PC-9 (cell line): ENCODE measurements at regions of chr20 and their contacts with region 1.

Region 1: DNA sequence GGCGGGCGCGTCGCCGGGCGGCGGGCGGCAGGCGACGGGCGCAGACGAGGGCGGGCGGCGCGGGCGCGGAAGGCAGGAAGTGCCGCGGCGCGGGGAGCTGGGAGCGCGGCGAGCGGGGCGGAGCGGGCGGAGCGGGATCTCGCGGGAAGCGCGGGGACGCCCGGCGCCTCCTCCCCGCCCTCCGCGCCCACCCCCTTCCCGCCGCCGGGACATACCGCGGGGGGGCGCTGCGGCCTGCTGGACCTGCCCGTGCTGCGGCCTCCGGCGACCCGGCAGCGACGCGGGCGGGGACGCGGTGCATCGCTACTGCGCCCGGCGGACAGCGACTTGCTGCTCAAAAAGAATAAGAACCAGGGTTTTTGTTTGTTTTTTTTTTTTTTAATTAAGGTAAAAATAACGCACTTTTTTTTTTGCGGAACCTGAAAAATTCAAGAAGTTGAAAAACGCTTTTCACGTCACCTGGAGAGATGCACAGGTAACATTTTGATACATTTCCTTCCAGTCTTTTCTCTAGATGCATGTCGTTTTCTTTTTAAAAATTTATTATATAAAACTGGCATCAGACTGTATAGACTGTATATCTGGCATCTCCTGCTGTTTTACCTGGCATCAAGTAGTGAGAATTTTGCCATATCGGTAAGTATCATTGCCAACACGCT is at the start of gene CENPB:
- DNase-seq: peak; percentile 59 to 96
- H3K4me3 ChIP-seq: peak within 1 kb of the TSS; percentile 68
- H3K27ac ChIP-seq: no peak within 1 kb of the TSS
- H3K4me1 ChIP-seq: peaks cover 36% of the 10 kb centered on the region
- H3K27me3 ChIP-seq: no peaks in the 10 kb centered on the region
- CTCF ChIP-seq: peak; percentile 56; the same call in 1 of the 2 replicates
- total RNA-seq, gene CENPB: 70.8 and 82.9 TPM in 2 replicates

Region 2: GRCh38 chr20:3727401-3728021 is 59.3 kb before region 1 on chr20:
- CTCF ChIA-PET with region 1: interaction called, 12 read pairs
- POLR2A ChIA-PET with region 1: no interaction called
- intact Hi-C with region 1: no loop called
- DNase-seq: peak in 1 of 2 experiments; percentile 37
- H3K4me3 ChIP-seq: no peak overlapping the region
- H3K27ac ChIP-seq: no peak overlapping the region
- H3K4me1 ChIP-seq: peaks cover 13% of the 10 kb centered on the region
- H3K27me3 ChIP-seq: 0 out of 2 replicates have a peak, but pooled peaks cover 5% of the 10 kb centered on the region
- CTCF ChIP-seq: no peak

Region 3: DNA sequence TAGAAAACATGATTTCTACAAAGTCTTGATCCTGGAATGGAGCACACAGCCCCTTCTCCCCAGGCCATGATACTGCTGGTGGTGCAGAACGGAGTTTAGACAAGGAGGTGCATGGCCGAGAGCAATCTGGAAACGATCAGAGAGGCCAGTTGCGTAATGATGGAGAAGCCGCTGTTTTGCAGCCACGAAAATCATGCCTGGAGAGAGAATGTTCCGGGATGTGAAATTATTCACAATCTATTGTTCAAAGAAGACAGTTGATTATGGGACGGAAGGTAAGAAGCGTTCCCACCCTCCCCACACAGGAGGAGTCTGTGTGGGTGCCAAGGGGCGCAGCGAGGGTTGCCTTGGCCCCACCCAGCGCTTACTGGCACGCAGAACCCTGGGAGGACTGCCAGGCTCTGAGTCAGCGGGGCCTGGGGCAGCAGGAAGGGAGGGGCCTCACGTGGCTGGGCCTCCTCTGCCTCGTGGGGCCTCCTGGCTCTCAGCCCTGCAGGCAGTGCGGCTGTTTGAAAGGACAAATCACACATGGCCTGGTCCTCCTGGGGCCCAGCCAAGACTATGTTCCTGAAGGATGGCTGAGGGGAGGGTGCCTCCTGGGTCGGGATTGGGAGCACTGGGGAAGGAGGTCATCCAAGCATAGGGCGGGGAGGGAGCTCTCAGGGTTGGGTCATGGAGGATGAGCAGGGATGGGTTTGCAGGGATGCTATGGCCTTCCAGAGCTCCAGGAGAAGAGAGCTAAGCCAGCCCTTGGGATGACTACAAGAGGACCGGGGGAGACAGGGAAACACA is 24.9 kb after region 1 on chr20:
- CTCF ChIA-PET with region 1: interaction called, 9 read pairs
- POLR2A ChIA-PET with region 1: interaction called, 15 read pairs
- intact Hi-C with region 1: no loop called
- DNase-seq: peak; percentile 92 to 100
- H3K4me3 ChIP-seq: peak overlapping the region; percentile 50
- H3K27ac ChIP-seq: peak overlapping the region; percentile 83
- H3K4me1 ChIP-seq: peaks cover 54% of the 10 kb centered on the region
- H3K27me3 ChIP-seq: no peaks in the 10 kb centered on the region
- CTCF ChIP-seq: no peak

Region 4: GRCh38 chr20:3820048-3820900 is 33.5 kb after region 1 on chr20 and contains the start of gene AP5S1:
- CTCF ChIA-PET with region 1: interaction called, 6 read pairs
- POLR2A ChIA-PET with region 1: interaction called, 3 read pairs
- intact Hi-C with region 1: loop called (anchors 1 kb)
- DNase-seq: peak; percentile 86 to 95
- H3K4me3 ChIP-seq: peak within 1 kb of the TSS; percentile 66
- H3K27ac ChIP-seq: peak within 1 kb of the TSS; percentile 85
- H3K4me1 ChIP-seq: peaks cover 6% of the 10 kb centered on the region; the same call in 1 of the 2 replicates
- H3K27me3 ChIP-seq: no peaks in the 10 kb centered on the region
- CTCF ChIP-seq: peak; percentile 96
- total RNA-seq, gene AP5S1: 18.3 and 20.0 TPM in 2 replicates

Region 5: GRCh38 chr20:3846740-3847428 is 60.1 kb after region 1 on chr20 and contains the start of gene MAVS:
- CTCF ChIA-PET with region 1: no interaction called
- POLR2A ChIA-PET with region 1: no interaction called
- intact Hi-C with region 1: loop called (anchors 2 kb)
- DNase-seq: peak; percentile 66 to 91
- H3K4me3 ChIP-seq: peak within 1 kb of the TSS; percentile 100
- H3K27ac ChIP-seq: peak within 1 kb of the TSS; percentile 88
- H3K4me1 ChIP-seq: peaks cover 54% of the 10 kb centered on the region
- H3K27me3 ChIP-seq: no peaks in the 10 kb centered on the region
- CTCF ChIP-seq: no peak
- total RNA-seq, gene MAVS: 53.6 and 61.3 TPM in 2 replicates

Region 6: GRCh38 chr20:3854462-3854871 is 67.7 kb after region 1 on chr20:
- CTCF ChIA-PET with region 1: no interaction called
- POLR2A ChIA-PET with region 1: no interaction called
- intact Hi-C with region 1: loop called (anchors 1 kb)
- DNase-seq: peak; percentile 25 to 62
- H3K4me3 ChIP-seq: no peak overlapping the region
- H3K27ac ChIP-seq: peak overlapping the region; percentile 11; the same call in 1 of the 2 replicates
- H3K4me1 ChIP-seq: peaks cover 7% of the 10 kb centered on the region; the same call in 1 of the 2 replicates
- H3K27me3 ChIP-seq: no peaks in the 10 kb centered on the region
- CTCF ChIP-seq: no peak

Region 7: GRCh38 chr20:4108495-4109306 is 321.9 kb after region 1 on chr20:
- CTCF ChIA-PET with region 1: no interaction called
- POLR2A ChIA-PET with region 1: no interaction called
- intact Hi-C with region 1: loop called (anchors 10 kb)
- DNase-seq: peak; percentile 68 to 72
- H3K4me3 ChIP-seq: no peak overlapping the region; the same call in 1 of the 2 replicates
- H3K27ac ChIP-seq: peak overlapping the region; percentile 65
- H3K4me1 ChIP-seq: peaks cover 40% of the 10 kb centered on the region
- H3K27me3 ChIP-seq: no peaks in the 10 kb centered on the region
- CTCF ChIP-seq: peak; percentile 97